ENCODE measurements at regions of chr14 and their contacts with region 1.

Region 1: DNA sequence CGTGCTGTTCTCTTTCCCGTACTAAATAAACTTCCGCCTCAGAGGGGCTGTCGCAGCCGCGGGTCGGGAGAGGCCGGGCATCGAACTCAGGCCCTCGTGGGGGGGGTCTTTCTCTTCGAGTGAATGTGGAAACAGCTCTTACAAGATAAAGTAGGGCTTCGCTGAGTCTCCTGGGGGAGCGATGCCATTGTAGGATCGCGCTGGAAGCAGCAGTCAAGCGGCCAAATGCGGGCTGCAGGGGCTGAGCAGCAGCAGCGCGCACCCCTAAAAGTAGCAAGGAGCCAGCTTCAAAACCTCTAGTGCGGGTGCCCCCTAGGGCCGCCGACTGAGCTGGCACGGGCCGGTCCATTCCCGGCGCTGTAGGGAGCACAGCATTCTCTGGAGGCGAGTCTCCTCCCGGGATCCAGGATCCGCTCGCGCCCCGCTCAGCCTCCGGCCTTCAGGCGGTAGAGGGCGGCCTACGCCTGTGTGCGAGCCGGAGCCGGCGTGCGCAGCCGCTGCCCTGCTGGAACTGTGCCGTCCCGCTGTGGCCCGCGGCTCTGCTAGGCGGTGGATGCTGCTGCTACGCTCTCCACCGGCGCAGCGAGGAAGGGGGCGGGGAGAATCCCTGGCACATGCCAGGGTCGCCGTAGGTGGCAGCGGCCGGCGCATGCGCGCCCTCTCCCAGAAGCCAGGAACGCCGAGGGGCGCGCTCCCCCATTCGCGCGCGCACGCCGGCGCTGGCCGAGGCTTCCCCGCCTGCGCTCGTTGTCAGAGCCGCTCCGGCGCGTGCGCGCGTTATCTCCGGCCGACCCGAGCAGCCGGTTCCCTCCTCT is at the start of gene FUT8:
- DNase-seq: peak; percentile 87
- H3K4me3 Mint-ChIP-seq: peak within 1 kb of the TSS; percentile 98
- H3K27ac Mint-ChIP-seq: peak within 1 kb of the TSS; percentile 92
- H3K4me1 Mint-ChIP-seq: peaks cover 72% of the 10 kb centered on the region
- H3K27me3 Mint-ChIP-seq: no peaks in the 10 kb centered on the region
- total RNA-seq, gene FUT8: 181 and 182 TPM in 2 replicates

Region 2: GRCh38 chr14:64986578-64987571 is 425.4 kb before region 1 on chr14 and contains the start of gene FNTB:
- intact Hi-C with region 1: loop called (anchors 1 kb)
- DNase-seq: peak; percentile 90
- H3K4me3 Mint-ChIP-seq: peak within 1 kb of the TSS; percentile 98
- H3K27ac Mint-ChIP-seq: peak within 1 kb of the TSS; percentile 99
- H3K4me1 Mint-ChIP-seq: peaks cover 51% of the 10 kb centered on the region
- H3K27me3 Mint-ChIP-seq: peaks cover 22% of the 10 kb centered on the region
- total RNA-seq, gene FNTB: 14.3 and 17.8 TPM in 2 replicates

Region 3: DNA sequence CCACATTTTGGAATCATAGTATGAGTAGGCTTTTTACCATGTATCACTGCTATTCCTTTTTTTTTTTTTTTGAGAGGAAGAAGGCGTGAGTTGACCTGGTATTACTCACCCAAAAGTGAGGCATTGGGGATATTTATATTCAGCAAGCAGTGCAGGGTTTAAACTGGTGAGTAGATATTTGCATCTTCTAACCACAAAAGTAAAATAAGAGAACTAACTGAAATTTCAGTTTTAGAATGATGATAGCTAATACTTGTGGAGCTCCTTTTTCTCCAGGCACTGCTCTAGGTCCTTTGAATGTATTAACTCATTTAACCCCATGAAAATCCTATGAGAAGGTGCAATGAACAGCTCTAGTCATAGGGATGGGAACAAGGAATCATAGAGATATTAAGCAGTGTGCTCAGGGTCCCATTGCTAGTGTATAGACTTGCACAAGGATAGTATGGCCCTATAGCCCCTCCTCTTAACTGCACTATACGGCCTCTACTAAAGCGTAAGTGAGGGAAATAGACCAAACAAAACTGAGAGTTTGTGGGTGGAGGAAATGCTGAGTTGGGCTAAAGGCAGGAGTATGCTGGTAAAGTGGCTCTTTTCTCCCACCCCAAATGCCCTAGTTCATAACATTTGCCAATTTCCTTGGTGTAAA is 205.7 kb before region 1 on chr14:
- intact Hi-C with region 1: loop called (anchors 1 kb)
- DNase-seq: no peak
- H3K4me3 Mint-ChIP-seq: peak overlapping the region; percentile 72
- H3K27ac Mint-ChIP-seq: peak overlapping the region; percentile 92
- H3K4me1 Mint-ChIP-seq: peaks cover 70% of the 10 kb centered on the region
- H3K27me3 Mint-ChIP-seq: no peaks in the 10 kb centered on the region

Region 4: GRCh38 chr14:65302571-65303189 is 109.6 kb before region 1 on chr14:
- intact Hi-C with region 1: loop called (anchors 1 kb)
- DNase-seq: peak; percentile 56
- H3K4me3 Mint-ChIP-seq: peak overlapping the region; percentile 77
- H3K27ac Mint-ChIP-seq: peak overlapping the region; percentile 99
- H3K4me1 Mint-ChIP-seq: peaks cover 81% of the 10 kb centered on the region
- H3K27me3 Mint-ChIP-seq: no peaks in the 10 kb centered on the region

Region 5: GRCh38 chr14:65329911-65330310 is 82.3 kb before region 1 on chr14:
- intact Hi-C with region 1: no loop called
- DNase-seq: no peak
- H3K4me3 Mint-ChIP-seq: no peak overlapping the region
- H3K27ac Mint-ChIP-seq: no peak overlapping the region
- H3K4me1 Mint-ChIP-seq: peaks cover 35% of the 10 kb centered on the region
- H3K27me3 Mint-ChIP-seq: no peaks in the 10 kb centered on the region

Region 6: GRCh38 chr14:65396082-65396910 is 15.9 kb before region 1 on chr14:
- intact Hi-C with region 1: loop called (anchors 2 kb)
- DNase-seq: no peak
- H3K4me3 Mint-ChIP-seq: peak overlapping the region; percentile 48
- H3K27ac Mint-ChIP-seq: peak overlapping the region; percentile 76
- H3K4me1 Mint-ChIP-seq: peaks cover 40% of the 10 kb centered on the region
- H3K27me3 Mint-ChIP-seq: no peaks in the 10 kb centered on the region

Region 7: DNA sequence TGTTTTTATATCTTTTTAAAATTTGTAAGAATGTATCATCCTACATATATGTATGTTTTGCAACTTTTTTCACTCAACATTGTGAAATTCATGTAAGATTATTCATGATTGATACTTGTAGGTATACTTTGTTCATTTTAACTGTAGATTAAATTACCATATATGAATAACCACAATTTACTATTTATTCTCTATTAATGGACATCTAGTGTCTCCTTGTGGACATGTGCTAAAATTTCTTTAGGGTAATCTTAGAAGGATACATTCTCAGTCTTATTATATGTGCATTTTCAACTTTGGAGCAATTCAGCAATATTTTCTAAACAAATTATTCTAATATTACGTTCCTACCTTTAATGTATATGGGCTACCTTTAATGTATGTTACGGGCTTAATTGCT is 192.7 kb after region 1 on chr14:
- intact Hi-C with region 1: loop called (anchors 2 kb)
- DNase-seq: no peak
- H3K4me3 Mint-ChIP-seq: no peak overlapping the region
- H3K27ac Mint-ChIP-seq: no peak overlapping the region
- H3K4me1 Mint-ChIP-seq: no peaks in the 10 kb centered on the region
- H3K27me3 Mint-ChIP-seq: no peaks in the 10 kb centered on the region

Region 8: DNA sequence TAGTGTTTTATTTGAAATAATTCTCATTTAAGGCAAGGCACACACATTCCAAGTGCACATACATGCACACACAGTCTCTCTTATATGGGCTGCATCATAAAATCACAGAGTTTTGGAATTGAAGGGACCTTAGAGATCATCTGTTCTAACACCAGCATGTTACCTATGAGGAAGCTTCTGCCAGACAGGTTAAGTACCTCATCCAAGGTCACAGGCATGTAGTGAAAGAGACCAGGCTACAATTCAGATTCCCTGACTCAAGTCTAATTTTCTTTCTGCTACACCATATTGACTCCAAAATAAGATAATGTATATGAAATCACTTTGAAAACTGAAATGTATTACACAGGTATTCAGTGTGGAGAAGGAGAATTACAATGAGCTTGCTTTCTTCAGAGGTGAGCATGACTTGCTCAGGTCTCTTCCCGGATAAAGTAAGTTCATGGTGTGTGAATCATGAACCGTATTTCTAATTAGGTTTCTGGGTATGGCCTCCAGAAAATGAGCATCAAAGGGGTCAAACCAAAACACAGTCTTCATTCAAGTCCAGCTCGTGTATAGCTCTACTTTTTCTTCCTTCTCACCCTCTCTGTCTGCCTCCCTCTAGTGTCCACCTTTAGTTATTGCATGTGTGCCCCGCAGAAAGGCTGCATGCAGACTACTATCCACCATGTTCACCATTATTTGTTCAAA is 412.2 kb after region 1 on chr14:
- intact Hi-C with region 1: loop called (anchors 1 kb)
- DNase-seq: peak; percentile 53
- H3K4me3 Mint-ChIP-seq: no peak overlapping the region
- H3K27ac Mint-ChIP-seq: no peak overlapping the region
- H3K4me1 Mint-ChIP-seq: peaks cover 28% of the 10 kb centered on the region
- H3K27me3 Mint-ChIP-seq: peaks cover 9% of the 10 kb centered on the region

Measured in activated T-helper 1 cell treated with anti-CD3 and anti-CD28 coated beads, Interleukin-12 subunit alpha, Interleukin-12 subunit beta, Interleukin-2, Interleukin-4 antibody, amounts not matched to agents 30 ng/mL and 10 ng/mL and 1 ng/mL, durations not matched to agents 14 hours and 24 hours and 36 hours (primary cell).